PC-3 (cell line): ENCODE measurements at regions of chr20 and their contacts with region 1.

Region 1: GRCh38 chr20:31661625-31662371 is 24.1 kb downstream of the COX4I2 start:
- DNase-seq: peak; percentile 68
- ATAC-seq: peak; percentile 52
- H3K4me3 ChIP-seq: peak overlapping the region; percentile 40; the same call in 1 of the 2 replicates
- H3K27ac ChIP-seq: peak overlapping the region; percentile 18
- H3K4me1 ChIP-seq: peaks cover 38% of the 10 kb centered on the region
- H3K27me3 ChIP-seq: no peaks in the 10 kb centered on the region
- CTCF ChIP-seq: peak; percentile 58

Region 2: GRCh38 chr20:31560094-31560899 is 101.5 kb before region 1 on chr20:
- CTCF ChIA-PET with region 1: no interaction called
- POLR2A ChIA-PET with region 1: interaction called, 34 read pairs
- intact Hi-C with region 1: no loop called
- DNase-seq: peak; percentile 69
- ATAC-seq: peak; percentile 39
- H3K4me3 ChIP-seq: peak overlapping the region; percentile 24
- H3K27ac ChIP-seq: peak overlapping the region; percentile 95
- H3K4me1 ChIP-seq: peaks cover 40% of the 10 kb centered on the region
- H3K27me3 ChIP-seq: no peaks in the 10 kb centered on the region
- CTCF ChIP-seq: peak; percentile 97

Region 3: GRCh38 chr20:31630187-31630790 is 31.5 kb before region 1 on chr20:
- CTCF ChIA-PET with region 1: interaction called, 21 read pairs
- POLR2A ChIA-PET with region 1: no interaction called
- intact Hi-C with region 1: no loop called
- DNase-seq: no peak
- ATAC-seq: no peak
- H3K4me3 ChIP-seq: no peak overlapping the region
- H3K27ac ChIP-seq: no peak overlapping the region
- H3K4me1 ChIP-seq: no peaks in the 10 kb centered on the region
- H3K27me3 ChIP-seq: no peaks in the 10 kb centered on the region
- CTCF ChIP-seq: no peak

Region 4: GRCh38 chr20:31704225-31705119 is 42.7 kb after region 1 on chr20:
- CTCF ChIA-PET with region 1: no interaction called
- POLR2A ChIA-PET with region 1: interaction called, 10 read pairs
- intact Hi-C with region 1: loop called (anchors 5 kb)
- DNase-seq: peak; percentile 98
- ATAC-seq: peak; percentile 87
- H3K4me3 ChIP-seq: peak overlapping the region; percentile 5; the same call in 1 of the 2 replicates
- H3K27ac ChIP-seq: peak overlapping the region; percentile 96
- H3K4me1 ChIP-seq: peaks cover 73% of the 10 kb centered on the region
- H3K27me3 ChIP-seq: no peaks in the 10 kb centered on the region
- CTCF ChIP-seq: no peak

Region 5: DNA sequence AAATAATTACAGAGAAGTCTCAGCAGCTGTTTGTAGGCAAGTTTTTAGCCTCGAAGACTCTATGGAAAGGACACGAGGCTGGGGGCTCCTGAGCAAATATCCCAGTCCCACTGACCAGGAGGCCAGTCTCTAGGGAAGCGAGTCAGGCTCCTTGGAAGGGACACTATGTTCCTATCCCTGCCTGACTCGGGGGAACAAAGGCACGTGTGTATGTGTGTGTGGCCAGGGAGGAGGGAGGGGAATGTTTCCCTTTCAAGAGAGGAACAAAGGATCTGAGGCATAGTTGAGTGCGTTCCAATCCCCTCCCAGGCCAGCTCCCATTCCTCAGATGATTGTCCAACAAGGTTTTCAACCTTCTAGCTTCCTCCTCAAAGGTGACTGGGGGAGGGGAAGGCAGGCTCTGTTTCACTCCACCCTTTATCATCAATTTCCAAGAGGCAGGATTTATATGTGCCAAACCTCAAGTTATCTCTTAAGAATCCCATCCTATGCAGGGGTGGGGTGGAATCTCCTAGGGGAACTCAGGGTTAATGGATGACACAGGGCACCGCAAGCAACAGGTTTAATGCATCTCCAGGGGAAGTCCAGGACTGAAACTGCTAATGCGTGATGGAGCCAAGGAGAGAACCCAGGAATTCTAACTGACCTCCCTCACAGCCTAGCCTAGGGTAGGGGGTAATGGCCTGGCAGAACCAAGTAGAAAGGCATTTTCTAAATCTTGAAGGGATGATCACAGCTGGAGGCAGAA is 50.9 kb after region 1 on chr20:
- CTCF ChIA-PET with region 1: interaction called, 4 read pairs
- POLR2A ChIA-PET with region 1: interaction called, 10 read pairs
- intact Hi-C with region 1: no loop called
- DNase-seq: peak; percentile 97
- ATAC-seq: peak; percentile 44
- H3K4me3 ChIP-seq: peak overlapping the region; percentile 59
- H3K27ac ChIP-seq: peak overlapping the region; percentile 99
- H3K4me1 ChIP-seq: peaks cover 92% of the 10 kb centered on the region
- H3K27me3 ChIP-seq: no peaks in the 10 kb centered on the region
- CTCF ChIP-seq: no peak